ENCODE measurements at regions of chr2 and their contacts with region 1.

Region 1: GRCh38 chr2:44955593-44956392 is 14.3 kb downstream of the SIX3 start:
- DNase-seq: no peak
- ATAC-seq: peak; percentile 91
- H3K4me3 ChIP-seq: peak overlapping the region; percentile 57; the same call in 1 of the 2 replicates
- H3K27ac ChIP-seq: no peak overlapping the region
- H3K4me1 ChIP-seq: no peaks in the 10 kb centered on the region; the same call in 1 of the 2 replicates
- H3K27me3 ChIP-seq: peaks cover 6 to 24% of the 10 kb centered on the region in 2 experiments
- CTCF ChIP-seq: peak; percentile 80 to 99 (median 92)
- EP300 ChIP-seq: no peak
- POLR2A ChIP-seq: no peak
- RAD21 ChIP-seq: peak; percentile 91

Region 2: DNA sequence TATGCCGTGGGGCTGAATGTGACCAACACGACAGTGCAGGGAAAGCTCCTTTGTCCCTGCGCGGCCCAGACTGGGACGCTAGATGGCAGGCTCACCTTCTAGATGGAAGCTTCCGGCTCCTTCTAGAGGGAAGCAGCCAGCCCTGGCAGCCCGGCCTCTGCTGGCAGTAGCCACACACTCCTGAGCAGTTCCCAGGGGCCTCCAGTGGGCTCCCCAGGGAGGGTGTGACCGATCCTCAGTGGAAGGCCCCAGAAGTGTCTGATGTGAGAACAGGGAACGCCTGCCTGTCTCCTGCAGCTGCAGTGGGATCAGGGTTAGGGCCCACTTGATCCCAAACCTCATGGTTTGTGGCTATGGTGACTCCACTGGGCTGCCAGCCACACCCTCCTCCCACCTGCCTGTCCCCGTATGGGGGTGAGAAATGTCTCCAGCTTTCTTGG is 911.5 kb before region 1 on chr2:
- CTCF ChIA-PET with region 1: interaction called, 14 read pairs
- POLR2A ChIA-PET with region 1: no interaction called
- RAD21 ChIA-PET with region 1: interaction called, 11 read pairs
- SMC1A ChIA-PET with region 1: interaction called, 9 read pairs
- in situ Hi-C with region 1: loop called (anchors 10 kb)
- intact Hi-C with region 1: loop called (anchors 2 kb)
- DNase-seq: peak; percentile 44
- ATAC-seq: peak; percentile 100
- H3K4me3 ChIP-seq: no peak overlapping the region
- H3K27ac ChIP-seq: no peak overlapping the region
- H3K4me1 ChIP-seq: peaks cover 5% of the 10 kb centered on the region
- H3K27me3 ChIP-seq: no peaks in the 10 kb centered on the region
- CTCF ChIP-seq: peak; percentile 94 to 98 (median 94); a peak in 5 of 6 replicates
- EP300 ChIP-seq: no peak; a peak in 1 of 4 replicates
- POLR2A ChIP-seq: no peak
- RAD21 ChIP-seq: peak; percentile 92

Region 3: DNA sequence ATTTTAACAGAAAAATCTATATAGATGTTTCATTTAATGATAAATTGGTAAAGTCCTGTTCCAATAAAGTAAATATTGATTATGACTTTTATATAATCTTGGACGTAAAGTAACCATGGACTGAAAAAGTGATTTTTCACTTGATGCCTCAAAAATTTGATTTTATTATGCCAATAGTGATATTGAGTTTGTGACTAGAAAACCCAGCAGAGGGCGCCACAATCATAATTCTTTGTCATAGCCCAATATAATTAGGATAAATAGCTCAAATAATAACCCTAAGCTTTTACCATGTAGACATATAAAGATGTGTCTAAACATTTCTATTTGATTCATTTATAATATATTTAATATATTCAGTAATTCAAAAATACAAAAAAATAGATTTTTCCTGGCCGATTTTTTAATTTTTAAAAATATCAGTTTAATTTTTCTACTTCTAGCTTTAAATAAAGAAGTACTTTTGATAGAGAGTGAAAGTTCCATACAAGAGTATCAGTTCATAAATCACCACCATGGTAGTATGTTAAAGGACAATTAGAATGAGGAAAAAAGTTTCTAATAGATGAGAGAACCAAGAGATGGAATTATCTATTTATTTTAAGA is 563.4 kb before region 1 on chr2:
- CTCF ChIA-PET with region 1: interaction called, 161 read pairs
- POLR2A ChIA-PET with region 1: no interaction called
- RAD21 ChIA-PET with region 1: interaction called, 56 read pairs
- SMC1A ChIA-PET with region 1: interaction called, 64 read pairs
- in situ Hi-C with region 1: no loop called
- intact Hi-C with region 1: loop called (anchors 1 kb)
- DNase-seq: no peak
- ATAC-seq: peak; percentile 47; the same call in 2 of the 3 replicates
- H3K4me3 ChIP-seq: no peak overlapping the region
- H3K27ac ChIP-seq: no peak overlapping the region
- H3K4me1 ChIP-seq: no peaks in the 10 kb centered on the region
- H3K27me3 ChIP-seq: no peaks in the 10 kb centered on the region
- CTCF ChIP-seq: peak; percentile 41 to 56 (median 50); a peak in 5 of 6 replicates
- EP300 ChIP-seq: no peak
- POLR2A ChIP-seq: no peak
- RAD21 ChIP-seq: peak; percentile 67

Region 4: DNA sequence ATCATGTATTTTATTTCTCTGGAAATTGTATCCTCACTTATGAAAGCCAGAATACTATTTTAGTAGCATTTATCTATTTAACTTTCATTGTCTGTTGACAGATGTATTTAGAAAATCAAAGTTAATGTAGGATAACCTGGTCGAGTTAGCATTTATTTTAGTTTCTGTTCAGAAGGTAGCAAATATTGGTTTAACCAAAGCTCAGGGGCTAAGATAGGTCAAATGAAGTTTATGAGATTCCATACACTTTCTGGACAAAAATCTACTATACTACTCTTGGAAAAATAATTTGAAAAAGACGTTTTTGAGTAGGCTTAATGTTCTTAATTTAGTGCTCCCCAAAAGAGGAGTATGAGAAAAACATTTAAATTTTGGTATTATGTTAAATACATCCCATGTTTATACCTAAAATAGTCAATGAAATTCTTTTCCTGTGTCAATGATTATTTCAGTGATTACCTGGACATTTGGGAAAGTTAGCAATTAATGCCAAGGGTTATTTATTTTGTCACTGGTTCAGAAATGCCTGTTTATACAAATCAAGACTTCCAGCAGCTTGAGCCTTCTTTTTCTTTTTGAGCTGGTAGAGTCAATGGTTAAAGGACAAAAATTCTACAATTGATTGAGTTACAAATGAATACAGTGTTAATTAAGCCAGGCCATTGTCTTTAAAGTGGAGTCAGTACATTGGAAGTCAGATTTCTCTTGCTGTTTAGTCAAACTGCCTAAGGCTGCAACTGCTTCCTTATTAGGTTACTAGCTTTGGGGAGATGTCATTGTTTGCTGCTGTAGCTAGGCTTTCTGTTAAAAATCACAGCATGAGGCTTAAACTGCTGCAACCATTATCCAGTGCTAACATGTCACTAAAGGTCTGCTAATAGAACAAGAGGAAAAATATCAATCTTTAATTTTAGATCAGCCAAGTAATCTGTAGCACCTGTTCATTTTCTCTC is 411.7 kb before region 1 on chr2:
- CTCF ChIA-PET with region 1: interaction called, 10 read pairs
- POLR2A ChIA-PET with region 1: no interaction called
- RAD21 ChIA-PET with region 1: interaction called, 4 read pairs
- SMC1A ChIA-PET with region 1: interaction called, 5 read pairs
- in situ Hi-C with region 1: no loop called
- intact Hi-C with region 1: no loop called
- DNase-seq: no peak
- ATAC-seq: no peak
- H3K4me3 ChIP-seq: no peak overlapping the region
- H3K27ac ChIP-seq: no peak overlapping the region
- H3K4me1 ChIP-seq: peaks cover 5% of the 10 kb centered on the region
- H3K27me3 ChIP-seq: no peaks in the 10 kb centered on the region
- CTCF ChIP-seq: no peak
- EP300 ChIP-seq: no peak
- POLR2A ChIP-seq: no peak
- RAD21 ChIP-seq: no peak

Region 5: GRCh38 chr2:44616667-44617155 is 339.1 kb before region 1 on chr2:
- CTCF ChIA-PET with region 1: interaction called, 14 read pairs
- POLR2A ChIA-PET with region 1: no interaction called
- RAD21 ChIA-PET with region 1: interaction called, 4 read pairs
- SMC1A ChIA-PET with region 1: interaction called, 3 read pairs
- in situ Hi-C with region 1: no loop called
- intact Hi-C with region 1: no loop called
- DNase-seq: peak; percentile 65
- ATAC-seq: peak; percentile 93
- H3K4me3 ChIP-seq: peak overlapping the region; percentile 42
- H3K27ac ChIP-seq: peak overlapping the region; percentile 71
- H3K4me1 ChIP-seq: peaks cover 26% of the 10 kb centered on the region
- H3K27me3 ChIP-seq: no peaks in the 10 kb centered on the region
- CTCF ChIP-seq: no peak
- EP300 ChIP-seq: peak; percentile 37 to 72; a peak in 2 of 4 replicates
- POLR2A ChIP-seq: no peak
- RAD21 ChIP-seq: no peak

Region 6: GRCh38 chr2:44707945-44708660 is 247.7 kb before region 1 on chr2:
- CTCF ChIA-PET with region 1: interaction called, 17 read pairs
- POLR2A ChIA-PET with region 1: no interaction called
- RAD21 ChIA-PET with region 1: interaction called, 9 read pairs
- SMC1A ChIA-PET with region 1: interaction called, 10 read pairs
- in situ Hi-C with region 1: no loop called
- intact Hi-C with region 1: loop called (anchors 10 kb)
- DNase-seq: peak; percentile 25
- ATAC-seq: peak; percentile 86
- H3K4me3 ChIP-seq: no peak overlapping the region; the same call in 1 of the 2 replicates
- H3K27ac ChIP-seq: peak overlapping the region; percentile 23; the same call in 1 of the 2 replicates
- H3K4me1 ChIP-seq: peaks cover 8% of the 10 kb centered on the region
- H3K27me3 ChIP-seq: no peaks in the 10 kb centered on the region
- CTCF ChIP-seq: no peak
- EP300 ChIP-seq: no peak
- POLR2A ChIP-seq: no peak
- RAD21 ChIP-seq: no peak

Region 7: DNA sequence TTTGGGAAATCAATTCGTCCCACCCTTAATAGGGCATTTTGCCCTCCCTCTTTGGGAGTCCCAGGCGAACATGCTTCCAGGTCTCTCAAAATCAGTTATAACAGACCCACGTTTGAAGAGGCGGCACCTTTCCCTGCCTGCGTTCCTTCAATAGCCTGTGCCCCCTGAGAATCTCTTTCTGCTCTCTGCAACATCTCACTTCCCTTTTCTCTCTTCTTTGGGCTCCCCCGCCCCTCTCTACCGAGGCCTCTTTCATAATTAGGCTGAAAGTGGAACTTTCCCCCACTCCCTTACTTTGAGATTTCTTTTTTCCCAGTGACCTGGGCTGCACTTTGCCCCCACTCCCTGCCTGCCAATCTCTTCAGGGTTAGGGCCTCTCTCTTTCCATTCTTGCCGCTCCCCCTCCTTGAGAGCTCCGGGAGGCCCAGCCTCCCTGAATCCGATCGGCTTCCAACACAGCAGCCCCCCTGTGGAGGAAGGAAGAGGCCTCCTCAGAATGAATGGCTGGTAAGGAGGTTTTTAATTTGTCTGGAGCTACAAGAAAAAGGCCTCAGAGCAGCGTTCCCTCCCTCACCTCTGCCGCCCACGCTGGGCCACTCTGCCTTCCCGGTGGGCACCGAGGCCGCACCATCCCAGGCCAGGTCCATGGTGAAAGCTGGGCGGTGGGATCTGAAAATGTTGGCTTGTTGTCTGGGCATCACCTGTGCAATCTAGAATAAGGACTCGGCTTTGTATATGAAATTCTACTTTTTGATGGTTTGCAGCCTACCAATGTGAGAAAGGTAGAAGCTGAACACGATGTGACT is 176.9 kb before region 1 on chr2:
- CTCF ChIA-PET with region 1: interaction called, 14 read pairs
- POLR2A ChIA-PET with region 1: no interaction called
- RAD21 ChIA-PET with region 1: interaction called, 10 read pairs
- SMC1A ChIA-PET with region 1: interaction called, 11 read pairs
- in situ Hi-C with region 1: no loop called
- intact Hi-C with region 1: loop called (anchors 1 kb)
- DNase-seq: peak; percentile 73
- ATAC-seq: peak; percentile 96
- H3K4me3 ChIP-seq: peak overlapping the region; percentile 78
- H3K27ac ChIP-seq: peak overlapping the region; percentile 72
- H3K4me1 ChIP-seq: peaks cover 25% of the 10 kb centered on the region
- H3K27me3 ChIP-seq: no peaks in the 10 kb centered on the region
- CTCF ChIP-seq: 0 out of 6 replicates have a peak, but pooled peaks of 1 of the 3 experiments have one; percentile 0
- EP300 ChIP-seq: peak; percentile 35 to 75; a peak in 2 of 4 replicates
- POLR2A ChIP-seq: no peak
- RAD21 ChIP-seq: 0 out of 2 replicates have a peak, but pooled peaks have one; percentile 12

Region 8: GRCh38 chr2:44886414-44886813 is 69.4 kb before region 1 on chr2:
- CTCF ChIA-PET with region 1: no interaction called
- POLR2A ChIA-PET with region 1: no interaction called
- RAD21 ChIA-PET with region 1: no interaction called
- SMC1A ChIA-PET with region 1: no interaction called
- in situ Hi-C with region 1: no loop called
- intact Hi-C with region 1: no loop called
- DNase-seq: no peak
- ATAC-seq: no peak
- H3K4me3 ChIP-seq: no peak overlapping the region
- H3K27ac ChIP-seq: no peak overlapping the region
- H3K4me1 ChIP-seq: no peaks in the 10 kb centered on the region
- H3K27me3 ChIP-seq: no peaks in the 10 kb centered on the region; a peak in 1 of 4 replicates
- CTCF ChIP-seq: no peak
- EP300 ChIP-seq: no peak
- POLR2A ChIP-seq: no peak
- RAD21 ChIP-seq: no peak

Region 9: DNA sequence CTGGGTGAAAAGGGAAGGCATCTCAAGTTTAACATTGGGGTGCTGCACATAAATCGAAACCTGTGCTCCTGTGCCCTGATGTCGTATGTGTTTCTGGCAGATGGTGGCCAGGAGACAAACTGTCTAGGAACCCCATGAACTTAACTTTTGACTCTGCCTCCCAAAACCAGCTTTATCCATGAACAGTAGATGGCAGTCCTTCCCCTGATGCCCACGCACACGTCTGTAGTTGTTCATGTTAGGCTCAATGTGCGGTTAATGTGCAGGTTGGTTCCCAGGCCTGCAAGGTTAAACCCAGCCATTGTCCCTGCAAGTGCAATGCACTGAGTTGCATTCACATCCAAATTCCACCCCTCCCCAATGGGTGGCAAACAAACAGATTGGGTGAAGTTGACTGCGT is 58.4 kb before region 1 on chr2:
- CTCF ChIA-PET with region 1: no interaction called
- POLR2A ChIA-PET with region 1: no interaction called
- RAD21 ChIA-PET with region 1: no interaction called
- SMC1A ChIA-PET with region 1: no interaction called
- in situ Hi-C with region 1: no loop called
- intact Hi-C with region 1: no loop called
- DNase-seq: no peak
- ATAC-seq: no peak
- H3K4me3 ChIP-seq: no peak overlapping the region
- H3K27ac ChIP-seq: no peak overlapping the region
- H3K4me1 ChIP-seq: peaks cover 3% of the 10 kb centered on the region; the same call in 1 of the 2 replicates
- H3K27me3 ChIP-seq: no peaks in the 10 kb centered on the region
- CTCF ChIP-seq: no peak
- EP300 ChIP-seq: no peak
- POLR2A ChIP-seq: no peak
- RAD21 ChIP-seq: no peak

Region 10: GRCh38 chr2:45046786-45047185 is 91.0 kb after region 1 on chr2:
- CTCF ChIA-PET with region 1: no interaction called
- POLR2A ChIA-PET with region 1: no interaction called
- RAD21 ChIA-PET with region 1: no interaction called
- SMC1A ChIA-PET with region 1: no interaction called
- in situ Hi-C with region 1: no loop called
- intact Hi-C with region 1: no loop called
- DNase-seq: no peak
- ATAC-seq: no peak
- H3K4me3 ChIP-seq: no peak overlapping the region
- H3K27ac ChIP-seq: no peak overlapping the region
- H3K4me1 ChIP-seq: no peaks in the 10 kb centered on the region
- H3K27me3 ChIP-seq: peaks cover 0 to 8% of the 10 kb centered on the region in 2 experiments; a peak in 3 of 4 replicates
- CTCF ChIP-seq: no peak
- EP300 ChIP-seq: no peak
- POLR2A ChIP-seq: no peak
- RAD21 ChIP-seq: no peak